SK-N-SH (cell line): ENCODE measurements at regions of chr17 and their contacts with region 1.

Region 1: DNA sequence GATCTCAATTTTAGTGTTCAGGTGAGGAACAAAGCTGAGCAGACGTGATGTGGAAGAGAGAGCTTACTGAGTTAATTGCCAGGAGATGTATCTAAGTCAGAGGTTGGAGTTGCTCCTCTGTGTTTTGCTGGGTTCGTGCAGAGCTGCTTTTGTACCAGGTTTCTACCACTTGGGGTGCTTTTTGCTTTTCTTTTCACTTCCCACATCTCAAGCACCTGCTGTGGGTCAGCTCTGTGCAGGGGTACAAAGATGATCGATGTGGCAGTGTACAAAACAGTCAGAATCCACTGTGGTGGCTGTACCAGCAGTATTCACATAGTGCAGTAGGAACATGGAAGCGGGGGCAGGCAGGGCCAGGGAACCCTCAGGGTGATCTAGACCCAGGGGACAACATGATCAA is 14.8 kb downstream of the UNK start:
- DNase-seq: no peak
- H3K4me3 ChIP-seq: no peak overlapping the region
- H3K27ac ChIP-seq: no peak overlapping the region
- H3K4me1 ChIP-seq: no peaks in the 10 kb centered on the region
- H3K27me3 ChIP-seq: no peaks in the 10 kb centered on the region
- CTCF ChIP-seq: no peak
- EP300 ChIP-seq: no peak
- RAD21 ChIP-seq: no peak

Region 2: DNA sequence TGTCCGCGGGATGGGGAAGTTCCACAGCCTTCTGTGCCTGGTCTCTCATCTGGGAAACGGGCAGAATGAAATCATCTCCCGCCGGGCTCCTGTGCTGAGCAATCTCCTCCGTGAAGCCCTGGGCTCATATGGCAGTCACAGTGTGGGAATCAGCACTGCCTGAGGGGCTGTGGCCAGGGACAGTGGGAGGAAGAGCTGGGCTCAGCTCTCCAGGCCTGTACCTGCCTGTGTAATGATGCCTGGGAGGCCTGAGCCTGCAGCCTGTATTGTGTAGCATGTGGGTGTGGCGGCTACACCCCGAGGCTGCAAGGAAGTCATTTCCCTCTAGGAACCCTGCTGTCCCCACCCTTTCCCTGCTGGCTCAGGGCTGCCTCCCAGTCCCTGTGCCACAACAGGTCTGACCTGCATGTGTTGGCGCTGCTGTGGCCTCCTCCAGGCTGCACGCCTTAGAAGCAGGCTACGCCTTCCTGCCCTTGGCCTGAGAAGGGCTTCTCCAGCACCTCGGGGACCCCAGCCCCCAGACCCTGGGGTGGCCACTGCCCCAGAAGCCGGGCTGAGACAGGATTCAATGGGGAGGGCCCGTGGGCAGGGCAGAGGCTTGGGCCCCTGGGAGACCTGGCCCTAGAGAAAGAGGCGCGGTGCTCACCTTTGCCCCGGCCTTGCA is 76.1 kb before region 1 on chr17:
- CTCF ChIA-PET with region 1: no interaction called
- POLR2A ChIA-PET with region 1: no interaction called
- DNase-seq: no peak
- H3K4me3 ChIP-seq: no peak overlapping the region
- H3K27ac ChIP-seq: no peak overlapping the region
- H3K4me1 ChIP-seq: peaks cover 0 to 4% of the 10 kb centered on the region in 2 experiments; a peak in 1 of 4 replicates
- H3K27me3 ChIP-seq: peaks cover 35% of the 10 kb centered on the region
- CTCF ChIP-seq: no peak
- EP300 ChIP-seq: no peak
- RAD21 ChIP-seq: no peak

Region 3: DNA sequence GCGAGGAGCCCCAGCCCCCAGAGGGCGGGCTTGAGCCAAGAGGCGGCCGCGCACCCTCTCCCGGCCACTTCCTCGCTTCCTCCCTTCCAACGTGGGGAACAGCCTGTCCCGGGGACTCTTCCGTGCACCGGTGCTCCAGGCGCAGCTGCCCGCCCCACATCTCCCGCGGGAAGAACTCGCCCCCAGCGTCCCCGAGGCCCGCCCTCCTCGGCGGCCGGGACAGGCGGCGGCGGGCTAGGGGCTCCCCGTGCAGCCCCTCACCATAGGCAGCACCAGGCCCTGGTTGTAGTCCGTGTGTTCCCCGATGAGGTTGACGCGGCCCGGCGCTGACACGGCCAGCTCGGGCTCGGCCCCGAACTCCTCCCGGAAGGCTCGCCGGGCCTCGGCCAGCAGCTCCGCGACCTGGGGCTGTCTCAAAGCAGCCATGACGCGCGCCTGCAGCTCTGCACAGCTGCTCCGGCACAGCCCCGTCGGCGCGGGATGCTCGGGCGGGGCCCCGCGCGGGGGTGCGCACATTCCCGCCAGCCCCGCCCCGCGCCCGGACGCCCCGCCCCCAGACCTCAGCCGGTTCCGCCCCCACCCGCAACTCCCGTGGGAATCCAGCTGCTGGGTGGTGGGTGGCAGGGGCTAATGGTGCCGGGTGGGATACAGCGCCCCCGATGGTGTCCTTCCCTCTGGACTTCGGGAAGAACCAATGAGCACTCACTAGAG is 34.5 kb before region 1 on chr17 and contains the start of gene GALK1:
- CTCF ChIA-PET with region 1: interaction called, 15 read pairs
- POLR2A ChIA-PET with region 1: interaction called, 3 read pairs
- DNase-seq: peak; percentile 98
- H3K4me3 ChIP-seq: peak within 1 kb of the TSS; percentile 58 to 92
- H3K27ac ChIP-seq: peak within 1 kb of the TSS; percentile 33 to 44; a peak in 3 of 4 replicates
- H3K4me1 ChIP-seq: peaks cover 8 to 19% of the 10 kb centered on the region in 2 experiments; a peak in 2 of 4 replicates
- H3K27me3 ChIP-seq: no peaks in the 10 kb centered on the region
- CTCF ChIP-seq: peak; percentile 38
- EP300 ChIP-seq: no peak
- RAD21 ChIP-seq: peak; percentile 49
- polyA plus RNA-seq, gene GALK1: 36.5 and 39.2 TPM in 2 replicates

Region 4: DNA sequence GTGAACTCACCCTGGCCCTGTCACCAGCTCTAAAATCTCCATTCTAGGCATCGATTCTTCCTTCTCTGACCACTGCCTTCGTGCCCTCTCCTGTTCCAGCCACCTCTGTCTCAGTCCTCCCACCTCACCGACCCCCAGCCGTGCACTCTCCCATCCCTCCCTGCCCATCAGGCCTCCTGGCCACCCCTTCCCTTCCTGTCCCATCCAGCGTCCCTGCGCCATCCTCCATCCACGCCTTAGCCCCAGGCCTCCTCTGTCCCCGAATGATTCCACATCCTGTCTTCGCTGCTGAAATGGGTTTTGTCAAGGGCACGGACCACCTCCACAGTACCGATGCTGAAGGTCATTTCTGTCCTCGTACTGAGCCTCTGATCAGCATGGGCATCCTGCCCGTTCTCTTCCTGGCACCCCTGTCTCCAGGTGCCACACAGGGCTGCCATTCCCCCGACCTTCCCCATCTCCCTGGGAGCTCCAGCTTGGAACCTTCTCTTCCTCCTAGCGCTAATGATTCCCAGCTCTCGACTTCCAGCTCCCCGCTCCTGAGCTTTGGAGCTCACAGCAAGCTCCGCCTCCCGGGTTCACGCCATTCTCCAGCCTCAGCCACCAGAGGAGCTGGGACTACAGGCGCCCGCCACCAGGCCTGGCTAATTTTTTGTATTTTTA is 94.8 kb after region 1 on chr17:
- CTCF ChIA-PET with region 1: no interaction called
- POLR2A ChIA-PET with region 1: no interaction called
- DNase-seq: no peak
- H3K4me3 ChIP-seq: no peak overlapping the region
- H3K27ac ChIP-seq: no peak overlapping the region
- H3K4me1 ChIP-seq: peaks cover 9 to 13% of the 10 kb centered on the region in 2 experiments; a peak in 3 of 4 replicates
- H3K27me3 ChIP-seq: no peaks in the 10 kb centered on the region
- CTCF ChIP-seq: no peak
- EP300 ChIP-seq: no peak
- RAD21 ChIP-seq: no peak